Sigmoid colon (tissue), 7 donors: ENCODE measurements at regions of chr4 and their contacts with region 1.

Region 1: GRCh38 chr4:184474263-184475095 is at the start of gene IRF2:
- DNase-seq: peak; percentile 99
- H3K4me3 ChIP-seq: peak within 1 kb of the TSS; percentile 80 to 95 (median 88)
- H3K27ac ChIP-seq: peak within 1 kb of the TSS; percentile 93 to 99 (median 96)
- H3K4me1 ChIP-seq: peaks cover 0 to 45% (median 34%) of the 10 kb centered on the region in 4 donors
- H3K27me3 ChIP-seq: no peaks in the 10 kb centered on the region
- CTCF ChIP-seq: peak in 2 of 4 experiments; percentile 14 to 16
- EP300 ChIP-seq: peak in 3 of 4 donors; percentile 1 to 89 (median 68)
- POLR2A ChIP-seq: peak; percentile 87 to 91
- total RNA-seq, gene IRF2: 29.3 to 39.7 (median 31.3) TPM

Region 2: GRCh38 chr4:184263910-184264732 is 210.4 kb before region 1 on chr4:
- intact Hi-C with region 1: loop called (anchors 5 kb)
- DNase-seq: peak; percentile 96
- H3K4me3 ChIP-seq: no peak overlapping the region
- H3K27ac ChIP-seq: peak overlapping the region in 1 of 4 donors; percentile 5
- H3K4me1 ChIP-seq: peaks cover 0 to 8% (median 0%) of the 10 kb centered on the region in 4 donors
- H3K27me3 ChIP-seq: no peaks in the 10 kb centered on the region
- CTCF ChIP-seq: peak; percentile 72 to 94 (median 90)
- EP300 ChIP-seq: no peak
- POLR2A ChIP-seq: no peak

Region 3: GRCh38 chr4:184287697-184288255 is 186.7 kb before region 1 on chr4:
- intact Hi-C with region 1: loop called (anchors 2 kb)
- DNase-seq: no peak
- H3K4me3 ChIP-seq: no peak overlapping the region
- H3K27ac ChIP-seq: peak overlapping the region in 2 of 4 donors; percentile 7 to 8
- H3K4me1 ChIP-seq: peaks cover 0 to 10% (median 2%) of the 10 kb centered on the region in 4 donors
- H3K27me3 ChIP-seq: no peaks in the 10 kb centered on the region
- CTCF ChIP-seq: peak in 2 of 4 experiments; percentile 30
- EP300 ChIP-seq: no peak
- POLR2A ChIP-seq: no peak

Region 4: DNA sequence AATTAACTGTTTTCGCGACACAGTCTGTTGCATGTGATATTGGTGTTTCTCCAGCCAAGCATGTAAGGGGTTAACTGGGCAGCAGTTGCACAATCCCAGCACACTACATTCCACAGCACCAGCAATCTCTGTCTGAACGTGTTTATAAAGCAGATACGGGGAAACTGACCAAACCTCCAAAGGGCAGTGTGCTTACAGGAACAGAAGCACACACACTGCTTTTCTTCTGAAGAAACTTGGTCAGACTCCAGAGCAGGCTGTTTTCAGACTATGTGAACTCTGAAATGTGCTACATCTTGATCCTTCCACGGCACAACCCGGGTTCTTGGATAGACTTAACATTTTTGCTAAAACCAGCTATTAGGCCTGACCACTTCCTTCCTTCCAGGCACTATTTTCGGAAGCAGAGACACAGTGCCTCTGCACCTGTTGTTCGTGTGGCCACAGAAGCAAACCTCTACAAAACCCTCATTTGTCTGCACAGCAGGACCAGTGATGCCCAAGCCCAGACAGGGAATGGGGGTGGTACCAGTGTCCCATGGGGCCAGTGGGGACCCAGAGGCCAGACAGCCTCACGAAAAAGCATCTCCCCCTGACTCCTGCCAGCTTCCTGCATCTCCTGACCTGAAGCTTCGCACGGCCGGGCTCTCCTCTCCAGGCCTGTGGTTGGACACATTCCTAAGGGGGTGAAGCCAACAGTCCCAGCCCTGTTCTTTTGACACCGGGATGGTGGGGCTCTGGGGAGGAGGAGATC is 90.2 kb before region 1 on chr4:
- intact Hi-C with region 1: loop called (anchors 5 kb)
- DNase-seq: peak; percentile 79
- H3K4me3 ChIP-seq: peak overlapping the region; percentile 11 to 36 (median 30)
- H3K27ac ChIP-seq: peak overlapping the region; percentile 79 to 84 (median 80)
- H3K4me1 ChIP-seq: peaks cover 0 to 50% (median 47%) of the 10 kb centered on the region in 4 donors
- H3K27me3 ChIP-seq: no peaks in the 10 kb centered on the region
- CTCF ChIP-seq: no peak
- EP300 ChIP-seq: no peak
- POLR2A ChIP-seq: no peak

Region 5: GRCh38 chr4:184424993-184425758 is 49.3 kb before region 1 on chr4:
- intact Hi-C with region 1: loop called (anchors 5 kb)
- DNase-seq: peak; percentile 80
- H3K4me3 ChIP-seq: no peak overlapping the region
- H3K27ac ChIP-seq: peak overlapping the region; percentile 14 to 76 (median 59)
- H3K4me1 ChIP-seq: peaks cover 0 to 37% (median 20%) of the 10 kb centered on the region in 4 donors
- H3K27me3 ChIP-seq: no peaks in the 10 kb centered on the region
- CTCF ChIP-seq: no peak
- EP300 ChIP-seq: peak in 1 of 4 donors; percentile 5
- POLR2A ChIP-seq: no peak

Region 6: GRCh38 chr4:184568770-184569169 is 94.3 kb after region 1 on chr4:
- intact Hi-C with region 1: no loop called
- DNase-seq: no peak
- H3K4me3 ChIP-seq: no peak overlapping the region
- H3K27ac ChIP-seq: no peak overlapping the region
- H3K4me1 ChIP-seq: no peaks in the 10 kb centered on the region
- H3K27me3 ChIP-seq: no peaks in the 10 kb centered on the region
- CTCF ChIP-seq: no peak
- EP300 ChIP-seq: no peak
- POLR2A ChIP-seq: no peak

Region 7: GRCh38 chr4:184649026-184649970 is 174.8 kb after region 1 on chr4 and contains the starts of genes CASP3 and PRIMPOL:
- intact Hi-C with region 1: loop called (anchors 5 kb)
- DNase-seq: peak; percentile 98
- H3K4me3 ChIP-seq: peak within 1 kb of the TSS; percentile 78 to 87 (median 86)
- H3K27ac ChIP-seq: peak within 1 kb of the TSS; percentile 94 to 100 (median 97)
- H3K4me1 ChIP-seq: peaks cover 0 to 49% (median 34%) of the 10 kb centered on the region in 4 donors
- H3K27me3 ChIP-seq: no peaks in the 10 kb centered on the region
- CTCF ChIP-seq: peak in 1 of 4 experiments; percentile 17
- EP300 ChIP-seq: no peak
- POLR2A ChIP-seq: peak; percentile 82 to 83
- total RNA-seq, gene CASP3: 9.4 to 20.3 (median 17.7) TPM
- total RNA-seq, gene PRIMPOL: 18.7 to 32.1 (median 29.9) TPM